ENCODE measurements at regions of chr18 and their contacts with region 1.

Region 1: GRCh38 chr18:25019086-25019860 is 332.7 kb downstream of the ZNF521 start:
- DNase-seq: no peak
- ATAC-seq: no peak
- H3K4me3 ChIP-seq: no peak overlapping the region
- H3K27ac ChIP-seq: no peak overlapping the region
- H3K4me1 ChIP-seq: no peaks in the 10 kb centered on the region
- H3K27me3 ChIP-seq: no peaks in the 10 kb centered on the region
- CTCF ChIP-seq: no peak

Region 2: DNA sequence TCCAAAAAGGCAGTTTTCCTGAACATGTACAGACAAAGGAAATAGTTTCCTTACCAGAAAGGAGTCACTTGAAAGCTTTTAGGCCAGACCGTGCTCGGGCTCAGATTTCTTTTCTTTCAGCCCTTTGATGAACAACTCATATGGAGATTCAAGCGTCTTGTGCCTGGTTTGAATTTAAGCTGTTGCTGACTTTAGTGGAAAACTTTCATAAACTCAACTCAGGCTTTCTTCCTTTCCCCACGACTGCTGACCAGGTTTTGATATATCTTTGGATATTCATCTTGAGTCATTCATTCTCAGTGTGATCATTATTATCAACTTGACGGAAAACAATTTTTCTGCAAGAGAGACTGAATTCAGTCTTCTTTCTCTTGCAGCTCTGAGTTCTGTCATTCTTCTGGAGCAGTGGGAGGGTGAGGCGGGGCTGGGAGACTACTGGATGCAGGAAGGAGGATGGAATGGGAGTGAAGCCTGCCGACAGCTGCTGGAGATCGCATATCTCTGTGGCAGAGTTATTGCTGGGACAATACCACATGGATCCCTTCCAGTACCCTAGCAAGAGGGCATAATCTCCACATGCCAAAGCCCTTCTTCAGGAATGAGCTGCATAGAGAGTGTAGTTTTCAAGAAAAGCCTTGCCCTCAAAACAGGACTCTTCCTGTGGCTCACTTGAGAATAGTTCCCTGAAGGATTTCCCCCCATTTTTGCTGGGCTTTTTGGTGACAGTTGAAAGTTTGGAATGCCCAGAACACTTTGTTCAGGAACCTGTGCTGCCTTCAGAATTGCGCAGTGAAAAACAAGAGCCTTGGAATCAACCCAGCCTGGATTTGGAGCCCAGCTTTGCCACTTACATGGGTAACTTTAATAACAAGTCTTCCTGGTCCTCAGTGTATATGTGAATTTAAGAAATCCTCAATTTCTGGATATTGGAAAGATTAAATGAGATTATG is 31.7 kb before region 1 on chr18:
- intact Hi-C with region 1: no loop called
- DNase-seq: peak; percentile 64 to 89
- ATAC-seq: peak; percentile 88 to 93 (median 88)
- H3K4me3 ChIP-seq: peak overlapping the region; percentile 54
- H3K27ac ChIP-seq: peak overlapping the region; percentile 86
- H3K4me1 ChIP-seq: peaks cover 73% of the 10 kb centered on the region
- H3K27me3 ChIP-seq: no peaks in the 10 kb centered on the region
- CTCF ChIP-seq: no peak

Region 3: GRCh38 chr18:25099895-25100294 is 80.6 kb after region 1 on chr18:
- intact Hi-C with region 1: loop called in 1 of 2 experiments (anchors 10 kb)
- DNase-seq: no peak
- ATAC-seq: no peak
- H3K4me3 ChIP-seq: no peak overlapping the region
- H3K27ac ChIP-seq: no peak overlapping the region
- H3K4me1 ChIP-seq: peaks cover 9% of the 10 kb centered on the region
- H3K27me3 ChIP-seq: no peaks in the 10 kb centered on the region
- CTCF ChIP-seq: no peak